ENCODE measurements at regions of chr12 and their contacts with region 1.

Region 1: GRCh38 chr12:8890313-8891085 is 23.8 kb upstream of the PHC1 start:
- DNase-seq: peak; percentile 51 to 66
- ATAC-seq: peak; percentile 82 to 93
- H3K4me3 ChIP-seq: peak overlapping the region; percentile 42
- H3K27ac ChIP-seq: peak overlapping the region in 1 of 2 experiments; percentile 44; a peak in 2 of 6 replicates
- H3K4me1 ChIP-seq: no peaks in the 10 kb centered on the region
- CTCF ChIP-seq: peak; percentile 96
- EP300 ChIP-seq: no peak
- POLR2A ChIP-seq: no peak
- RAD21 ChIP-seq: peak; percentile 79 to 82

Region 2: GRCh38 chr12:8655421-8655820 is 235.1 kb before region 1 on chr12:
- CTCF ChIA-PET with region 1: interaction called, 14 read pairs
- POLR2A ChIA-PET with region 1: no interaction called
- DNase-seq: no peak
- ATAC-seq: no peak
- H3K4me3 ChIP-seq: no peak overlapping the region
- H3K27ac ChIP-seq: no peak overlapping the region; a peak in 1 of 6 replicates
- H3K4me1 ChIP-seq: no peaks in the 10 kb centered on the region; the same call in 2 of the 3 replicates
- CTCF ChIP-seq: no peak
- EP300 ChIP-seq: no peak
- POLR2A ChIP-seq: no peak
- RAD21 ChIP-seq: no peak

Region 3: GRCh38 chr12:8681041-8681902 is 209.2 kb before region 1 on chr12:
- CTCF ChIA-PET with region 1: interaction called, 60 read pairs
- POLR2A ChIA-PET with region 1: no interaction called
- DNase-seq: peak in 1 of 2 experiments; percentile 52
- ATAC-seq: peak; percentile 28 to 45; a peak in 3 of 6 replicates
- H3K4me3 ChIP-seq: no peak overlapping the region
- H3K27ac ChIP-seq: no peak overlapping the region; a peak in 1 of 6 replicates
- H3K4me1 ChIP-seq: peaks cover 7% of the 10 kb centered on the region; the same call in 2 of the 3 replicates
- CTCF ChIP-seq: no peak
- EP300 ChIP-seq: no peak
- POLR2A ChIP-seq: no peak
- RAD21 ChIP-seq: no peak

Region 4: GRCh38 chr12:8784489-8784888 is 106.0 kb before region 1 on chr12:
- CTCF ChIA-PET with region 1: interaction called, 11 read pairs
- POLR2A ChIA-PET with region 1: no interaction called
- DNase-seq: no peak
- ATAC-seq: peak in 1 of 2 experiments; percentile 41; a peak in 2 of 6 replicates
- H3K4me3 ChIP-seq: no peak overlapping the region
- H3K27ac ChIP-seq: no peak overlapping the region
- H3K4me1 ChIP-seq: no peaks in the 10 kb centered on the region
- CTCF ChIP-seq: no peak
- EP300 ChIP-seq: no peak
- POLR2A ChIP-seq: no peak
- RAD21 ChIP-seq: no peak

Region 5: DNA sequence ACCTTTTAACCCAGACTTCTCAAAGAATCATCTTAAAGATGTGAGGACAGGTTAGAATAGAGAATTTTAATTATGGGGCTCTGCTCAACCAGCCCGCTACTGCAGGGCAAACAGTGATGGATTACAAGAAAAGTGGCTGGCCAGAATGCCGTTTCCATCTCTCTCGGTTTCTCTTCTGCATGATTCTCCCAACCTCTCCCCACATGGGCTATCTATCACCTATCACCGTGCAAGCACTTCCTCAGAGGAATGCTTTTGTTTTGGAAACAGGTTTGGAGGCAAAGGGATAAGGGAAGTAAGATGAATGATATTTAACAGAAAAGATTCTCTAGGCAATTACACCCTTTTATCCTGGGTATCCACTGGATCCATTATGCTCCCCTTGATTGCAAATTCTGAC is 13.6 kb before region 1 on chr12:
- CTCF ChIA-PET with region 1: interaction called, 13 read pairs
- POLR2A ChIA-PET with region 1: no interaction called
- DNase-seq: no peak
- ATAC-seq: no peak
- H3K4me3 ChIP-seq: no peak overlapping the region
- H3K27ac ChIP-seq: no peak overlapping the region
- H3K4me1 ChIP-seq: no peaks in the 10 kb centered on the region
- CTCF ChIP-seq: no peak
- EP300 ChIP-seq: no peak
- POLR2A ChIP-seq: no peak
- RAD21 ChIP-seq: no peak

Region 6: DNA sequence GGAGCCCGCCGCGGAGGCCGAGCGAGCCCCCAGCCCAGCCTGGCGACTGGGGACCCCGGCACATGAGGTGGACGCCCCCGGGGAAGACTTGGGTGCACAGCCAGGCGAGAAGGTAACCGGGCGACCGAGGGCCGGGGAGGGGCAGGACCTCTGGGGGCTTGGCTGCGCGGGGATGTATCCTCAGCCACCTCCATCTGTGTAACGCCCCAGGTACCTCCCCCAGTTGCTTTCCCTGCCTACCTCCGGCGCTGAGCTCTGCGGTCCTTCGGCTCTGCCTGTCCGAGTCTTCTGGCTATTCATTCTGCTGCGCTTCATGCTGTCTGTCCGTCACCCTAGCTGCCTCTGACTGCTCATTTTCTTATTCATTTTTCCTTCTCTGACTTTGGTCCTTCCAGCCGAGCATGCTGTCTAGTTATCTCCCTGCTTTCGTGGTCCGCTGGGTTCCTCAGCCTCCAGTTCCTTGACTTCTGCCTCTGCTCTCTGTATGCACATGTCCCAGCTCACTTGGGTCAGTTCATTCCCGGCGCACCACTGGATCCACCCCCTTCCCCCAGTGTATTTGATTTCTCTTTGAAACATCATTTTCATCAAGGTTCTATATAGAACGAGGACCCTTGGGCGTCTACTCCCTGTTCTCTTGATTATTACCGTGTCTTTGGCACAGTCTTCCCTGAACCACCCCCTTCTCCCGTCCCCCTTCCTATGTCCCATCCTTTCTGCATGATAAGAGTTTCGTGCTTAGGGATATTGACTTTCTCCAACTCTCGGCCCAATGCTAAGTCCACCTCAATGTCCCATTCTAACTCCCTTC is 24.4 kb after region 1 on chr12:
- CTCF ChIA-PET with region 1: interaction called, 22 read pairs
- POLR2A ChIA-PET with region 1: no interaction called
- DNase-seq: peak; percentile 70 to 71
- ATAC-seq: peak; percentile 92 to 96
- H3K4me3 ChIP-seq: peak overlapping the region; percentile 50
- H3K27ac ChIP-seq: peak overlapping the region; percentile 83 to 89
- H3K4me1 ChIP-seq: peaks cover 18% of the 10 kb centered on the region
- CTCF ChIP-seq: no peak
- EP300 ChIP-seq: no peak
- POLR2A ChIP-seq: 0 out of 2 replicates have a peak, but pooled peaks have one; percentile 20
- RAD21 ChIP-seq: no peak

Measured in A549 (cell line).